Naive thymus-derived CD4-positive, alpha-beta T cell (primary cell): ENCODE measurements at regions of chr9 and their contacts with region 1.

Region 1: DNA sequence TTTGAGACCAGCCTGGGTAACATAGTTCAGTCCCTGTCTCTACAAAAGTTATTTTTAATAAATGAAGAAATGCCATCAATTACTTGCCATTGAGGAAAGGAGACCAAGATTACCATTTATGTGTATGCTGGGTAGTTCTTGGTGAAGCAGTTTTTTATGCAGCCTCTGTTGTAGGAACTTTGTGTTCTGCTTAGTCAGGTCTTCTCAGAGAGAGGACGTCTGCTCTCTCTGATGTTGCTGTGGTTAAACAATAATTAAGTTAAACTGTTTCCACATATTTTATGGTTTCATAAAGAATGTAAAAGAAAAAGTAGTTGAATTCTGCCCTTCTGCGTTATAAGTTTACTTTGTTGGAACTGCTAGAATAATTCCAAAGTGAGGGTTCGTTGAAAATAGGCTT is 210.5 kb downstream of the KDM4C start:
- DNase-seq: no peak
- ATAC-seq: no peak
- H3K4me3 ChIP-seq: no peak overlapping the region
- H3K4me3 Mint-ChIP-seq: no peak overlapping the region
- H3K27ac ChIP-seq: no peak overlapping the region
- H3K27ac Mint-ChIP-seq: peak overlapping the region in 1 of 9 donors; percentile 2
- H3K4me1 ChIP-seq: no peaks in the 10 kb centered on the region
- H3K4me1 Mint-ChIP-seq: peaks cover 0 to 63% (median 29%) of the 10 kb centered on the region in 7 donors
- H3K27me3 ChIP-seq: no peaks in the 10 kb centered on the region
- H3K27me3 Mint-ChIP-seq: no peaks in the 10 kb centered on the region

Region 2: DNA sequence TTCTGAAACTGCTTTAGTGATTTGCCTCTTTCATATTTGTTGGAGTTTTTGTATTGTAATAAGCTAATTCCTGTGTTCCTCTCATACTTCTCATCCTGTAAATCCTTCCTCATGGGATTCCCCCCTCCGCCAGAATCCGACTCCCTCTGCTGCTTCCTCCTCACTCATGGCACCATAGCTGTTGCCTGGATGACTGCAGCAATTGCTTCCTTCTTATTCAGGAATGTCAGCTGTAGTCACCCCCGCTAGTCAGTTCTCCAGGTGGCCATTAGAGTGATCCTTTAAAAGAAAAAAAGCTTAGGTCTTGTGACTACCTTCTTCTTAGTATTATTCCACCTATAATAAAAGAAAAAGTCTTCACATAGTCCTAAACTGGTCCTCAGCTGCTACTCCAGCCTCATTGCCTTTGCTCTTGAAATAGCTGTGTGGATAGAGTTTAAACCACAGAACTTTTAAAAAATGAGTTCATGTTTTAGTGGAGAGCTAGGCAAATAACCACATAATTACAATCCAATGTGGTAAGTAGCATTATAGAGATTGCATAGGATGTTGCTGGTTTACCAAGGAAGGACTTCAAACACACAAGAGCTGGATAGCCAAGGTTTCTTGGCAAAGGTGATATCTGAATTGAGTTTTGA is 16.8 kb after region 1 on chr9:
- CTCF ChIA-PET with region 1: no interaction called
- POLR2A ChIA-PET with region 1: no interaction called
- intact Hi-C with region 1: loop called in 1 of 2 experiments (anchors 2 kb)
- DNase-seq: no peak
- ATAC-seq: no peak
- H3K4me3 ChIP-seq: no peak overlapping the region
- H3K4me3 Mint-ChIP-seq: no peak overlapping the region
- H3K27ac ChIP-seq: no peak overlapping the region
- H3K27ac Mint-ChIP-seq: peak overlapping the region in 1 of 9 donors; percentile 32
- H3K4me1 ChIP-seq: no peaks in the 10 kb centered on the region
- H3K4me1 Mint-ChIP-seq: no peaks in the 10 kb centered on the region
- H3K27me3 ChIP-seq: no peaks in the 10 kb centered on the region
- H3K27me3 Mint-ChIP-seq: no peaks in the 10 kb centered on the region